ENCODE measurements at regions of chr2 and their contacts with region 1.

Region 1: GRCh38 chr2:38740851-38741731 is 10.1 kb downstream of the SRSF7 start:
- DNase-seq: peak; percentile 72 to 77
- ATAC-seq: peak; percentile 67
- H3K4me3 ChIP-seq: no peak overlapping the region
- H3K27ac ChIP-seq: no peak overlapping the region
- H3K4me1 ChIP-seq: no peaks in the 10 kb centered on the region
- H3K27me3 ChIP-seq: no peaks in the 10 kb centered on the region

Region 2: DNA sequence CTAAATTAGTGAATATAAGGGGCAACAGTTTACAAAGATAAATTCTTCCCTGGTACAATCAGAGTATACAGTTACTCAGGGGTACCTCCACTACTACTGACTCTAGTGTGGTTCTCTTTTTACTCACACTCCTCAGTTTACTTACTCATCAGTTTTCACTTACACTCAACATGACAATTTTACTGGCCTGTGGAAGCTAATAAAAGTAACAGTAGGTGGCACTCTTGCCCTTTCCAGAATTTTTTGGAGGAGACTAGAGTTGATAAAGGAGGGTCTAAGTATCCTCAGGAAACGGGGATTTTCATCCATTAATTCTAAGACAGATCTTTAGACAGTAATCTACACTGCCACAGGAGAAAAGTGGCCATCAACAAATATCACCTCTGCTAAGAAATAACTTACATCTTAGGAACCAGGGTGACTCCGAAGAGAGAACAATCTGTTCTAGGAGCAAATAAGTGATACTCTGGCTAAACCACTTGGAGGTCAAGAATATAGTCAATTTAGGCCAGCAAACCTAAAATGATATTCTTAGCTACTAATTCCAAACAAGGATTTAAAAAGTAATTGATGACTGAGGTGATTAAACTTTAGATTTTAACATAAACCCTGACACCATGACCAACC is 425.3 kb before region 1 on chr2:
- intact Hi-C with region 1: loop called (anchors 2 to 5 kb)
- DNase-seq: no peak
- ATAC-seq: peak; percentile 60
- H3K4me3 ChIP-seq: no peak overlapping the region
- H3K27ac ChIP-seq: no peak overlapping the region
- H3K4me1 ChIP-seq: no peaks in the 10 kb centered on the region
- H3K27me3 ChIP-seq: no peaks in the 10 kb centered on the region

Region 3: GRCh38 chr2:38327580-38327979 is 413.5 kb before region 1 on chr2:
- intact Hi-C with region 1: loop called in 1 of 2 experiments (anchors 5 kb)
- DNase-seq: no peak
- ATAC-seq: no peak
- H3K4me3 ChIP-seq: no peak overlapping the region
- H3K27ac ChIP-seq: no peak overlapping the region
- H3K4me1 ChIP-seq: peaks cover 0 to 1% of the 10 kb centered on the region in 2 donors
- H3K27me3 ChIP-seq: no peaks in the 10 kb centered on the region

Region 4: GRCh38 chr2:38535744-38536506 is 205.2 kb before region 1 on chr2:
- intact Hi-C with region 1: loop called (anchors 5 kb)
- DNase-seq: peak; percentile 90 to 96
- ATAC-seq: peak; percentile 95
- H3K4me3 ChIP-seq: peak overlapping the region in 1 of 2 donors; percentile 17
- H3K27ac ChIP-seq: no peak overlapping the region
- H3K4me1 ChIP-seq: no peaks in the 10 kb centered on the region
- H3K27me3 ChIP-seq: no peaks in the 10 kb centered on the region

Region 5: DNA sequence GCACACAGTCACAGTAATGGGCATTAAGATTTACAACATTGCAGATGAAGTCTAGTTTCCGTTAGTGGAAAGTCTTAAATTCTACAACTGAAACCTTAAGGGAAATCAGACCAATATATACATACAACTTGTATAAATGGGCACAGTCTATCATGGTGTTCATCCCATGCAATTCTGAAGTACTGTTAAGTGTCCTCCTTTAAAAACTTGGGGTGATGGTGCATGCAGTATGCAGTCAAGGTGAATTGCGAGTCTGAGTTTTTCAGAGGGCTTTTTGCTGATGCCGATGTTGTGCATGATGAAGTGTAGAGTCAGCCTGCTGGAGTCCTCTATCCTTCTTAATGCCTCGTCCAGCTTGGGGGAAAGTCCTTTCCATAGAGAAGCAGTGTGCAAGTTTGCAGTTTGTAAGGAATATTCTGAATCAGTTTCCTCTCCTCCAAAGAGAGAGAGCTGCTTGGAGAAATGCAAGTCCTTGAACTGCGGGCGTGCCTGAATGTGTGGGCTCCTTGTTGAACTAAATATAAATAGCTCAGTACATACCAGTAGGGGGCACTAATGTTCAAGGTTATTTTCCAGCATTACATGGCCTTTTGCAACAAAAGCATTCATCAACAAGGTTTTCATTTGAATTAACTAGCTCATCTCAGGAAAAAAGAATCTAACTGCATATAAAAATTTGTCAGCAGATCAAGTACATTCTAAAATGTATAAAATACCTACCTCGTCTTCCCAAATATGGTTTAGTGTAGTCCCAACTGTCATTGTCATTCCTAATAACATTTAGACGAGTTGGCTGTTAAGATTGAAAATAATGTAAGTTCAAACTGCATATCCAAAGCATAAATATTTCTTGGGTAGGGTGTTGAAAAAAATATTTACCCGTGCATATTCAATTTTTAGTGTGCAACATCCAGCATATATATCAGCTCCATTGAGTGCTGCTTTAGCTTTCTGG is 159.6 kb before region 1 on chr2:
- intact Hi-C with region 1: loop called (anchors 5 kb)
- DNase-seq: no peak
- ATAC-seq: peak; percentile 82
- H3K4me3 ChIP-seq: no peak overlapping the region
- H3K27ac ChIP-seq: no peak overlapping the region
- H3K4me1 ChIP-seq: peaks cover 2 to 3% of the 10 kb centered on the region in 2 donors
- H3K27me3 ChIP-seq: no peaks in the 10 kb centered on the region

Region 6: DNA sequence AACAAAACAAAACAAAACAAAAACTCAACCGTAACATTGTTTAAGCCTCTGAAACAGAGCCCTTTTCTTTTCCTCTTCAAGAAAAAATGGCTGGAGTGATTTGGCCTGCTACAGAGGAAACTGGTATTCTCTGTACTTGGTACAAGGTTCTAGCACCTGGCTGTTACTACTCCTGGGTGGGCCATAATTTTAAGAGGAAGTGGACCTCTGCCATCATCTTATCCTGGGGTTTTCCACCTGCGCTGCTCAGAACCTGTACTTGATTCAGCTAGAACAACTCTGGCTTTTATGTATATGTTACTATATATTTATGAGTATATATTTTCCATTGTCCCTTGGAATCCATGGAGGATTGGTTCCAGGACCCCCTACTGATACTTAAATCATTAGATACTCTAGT is 12.4 kb before region 1 on chr2:
- intact Hi-C with region 1: loop called in 1 of 2 experiments (anchors 2 kb)
- DNase-seq: no peak
- ATAC-seq: no peak
- H3K4me3 ChIP-seq: no peak overlapping the region
- H3K27ac ChIP-seq: no peak overlapping the region
- H3K4me1 ChIP-seq: no peaks in the 10 kb centered on the region
- H3K27me3 ChIP-seq: no peaks in the 10 kb centered on the region

Region 7: DNA sequence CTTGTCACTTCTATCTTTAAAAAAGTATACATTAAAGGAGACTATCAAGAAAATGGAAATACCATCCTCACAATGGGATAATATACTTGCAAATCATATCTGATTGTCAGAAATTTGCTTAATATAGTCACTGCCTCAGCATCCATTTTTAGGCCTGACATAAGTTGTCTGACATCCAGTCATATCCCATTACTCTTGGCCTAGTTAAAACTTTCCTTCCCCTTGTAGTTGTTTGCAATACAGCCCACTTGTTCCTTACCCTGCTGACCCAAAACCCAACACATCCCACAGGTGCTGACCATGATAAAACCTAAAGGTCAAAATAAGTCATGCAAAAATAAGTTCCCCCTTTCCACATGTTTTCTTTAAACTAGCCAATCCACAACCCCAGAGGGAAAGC is 145.0 kb after region 1 on chr2:
- intact Hi-C with region 1: no loop called
- DNase-seq: no peak
- ATAC-seq: no peak
- H3K4me3 ChIP-seq: no peak overlapping the region
- H3K27ac ChIP-seq: no peak overlapping the region
- H3K4me1 ChIP-seq: no peaks in the 10 kb centered on the region
- H3K27me3 ChIP-seq: no peaks in the 10 kb centered on the region